ENCODE measurements at regions of chr3 and their contacts with region 1.

Region 1: GRCh38 chr3:66253790-66254620 is 33.2 kb downstream of the SLC25A26 start:
- DNase-seq: peak in 4 of 5 donors; percentile 30 to 50 (median 41)
- H3K4me3 ChIP-seq: no peak overlapping the region
- H3K4me3 Mint-ChIP-seq: no peak overlapping the region
- H3K27ac ChIP-seq: no peak overlapping the region
- H3K27ac Mint-ChIP-seq: peak overlapping the region in 2 of 7 donors; percentile 24 to 64
- H3K4me1 ChIP-seq: no peaks in the 10 kb centered on the region
- H3K4me1 Mint-ChIP-seq: peaks cover 4 to 11% (median 5%) of the 10 kb centered on the region in 4 donors
- H3K27me3 ChIP-seq: no peaks in the 10 kb centered on the region
- H3K27me3 Mint-ChIP-seq: no peaks in the 10 kb centered on the region

Region 2: DNA sequence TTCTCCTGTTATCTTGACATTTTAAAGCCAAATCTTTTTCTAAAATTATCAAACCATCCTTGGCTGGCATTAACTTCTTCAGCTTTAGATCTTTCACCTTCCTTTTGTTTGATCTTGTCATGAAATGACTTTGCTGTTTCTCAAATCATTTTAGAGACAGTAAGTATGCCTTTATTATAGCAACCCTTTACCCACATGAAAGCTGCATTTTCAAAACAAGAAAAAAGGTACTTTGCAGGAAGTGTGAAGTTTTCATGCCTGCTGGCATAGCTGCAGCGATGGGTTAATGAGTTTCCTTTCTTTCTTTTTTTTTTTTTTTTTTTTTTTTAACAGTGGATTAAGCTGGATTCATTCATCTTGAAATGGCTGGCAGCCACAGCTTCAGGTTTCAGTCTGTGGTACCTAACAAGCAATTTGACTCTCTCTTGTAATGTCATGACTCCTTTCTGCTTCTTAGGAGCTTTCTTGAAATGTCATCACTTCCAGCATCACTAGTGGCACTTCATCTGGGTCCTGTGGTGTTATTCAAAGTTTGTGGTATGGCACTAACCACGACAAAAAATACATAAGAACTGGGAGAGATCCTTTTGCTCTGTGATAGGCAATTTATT is 14.4 kb before region 1 on chr3:
- CTCF ChIA-PET with region 1: interaction called, 11 read pairs
- POLR2A ChIA-PET with region 1: no interaction called
- intact Hi-C with region 1: no loop called
- DNase-seq: peak in 1 of 5 donors; percentile 10
- H3K4me3 ChIP-seq: no peak overlapping the region
- H3K4me3 Mint-ChIP-seq: no peak overlapping the region
- H3K27ac ChIP-seq: no peak overlapping the region
- H3K27ac Mint-ChIP-seq: peak overlapping the region in 1 of 7 donors; percentile 2
- H3K4me1 ChIP-seq: no peaks in the 10 kb centered on the region
- H3K4me1 Mint-ChIP-seq: peaks cover 5 to 20% (median 13%) of the 10 kb centered on the region in 4 donors
- H3K27me3 ChIP-seq: no peaks in the 10 kb centered on the region
- H3K27me3 Mint-ChIP-seq: no peaks in the 10 kb centered on the region

Region 3: DNA sequence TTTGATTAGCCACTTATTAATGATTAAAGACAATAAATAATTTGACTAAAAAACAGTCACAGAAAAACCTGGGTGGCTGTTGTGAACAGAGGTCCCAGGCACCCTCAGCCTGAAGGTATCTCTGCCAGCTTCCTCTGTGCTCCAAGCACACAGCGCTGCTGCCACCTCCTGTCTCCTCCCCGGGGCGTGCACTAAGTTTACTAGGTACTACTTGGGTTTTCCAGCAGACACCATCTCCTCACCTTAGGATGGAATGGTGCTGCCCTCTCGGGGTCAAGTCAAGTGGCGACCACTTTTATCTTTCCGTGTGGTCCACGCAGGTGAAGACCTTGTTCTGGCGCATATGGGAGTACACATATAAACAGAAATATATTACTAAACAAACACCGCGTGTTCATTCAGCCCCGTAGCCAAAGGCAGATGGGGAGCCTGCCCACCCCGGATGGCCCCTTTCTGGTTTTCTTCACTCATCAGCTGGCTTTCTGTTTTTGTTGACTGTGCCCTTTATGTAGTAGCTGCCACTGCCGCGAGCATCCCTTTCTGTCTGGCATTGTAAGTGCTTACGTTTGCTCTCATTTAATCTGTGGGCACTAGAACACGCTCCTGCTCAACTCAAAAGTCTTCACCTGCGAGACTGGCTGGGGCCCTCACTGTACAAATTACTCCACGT is 118.8 kb after region 1 on chr3:
- CTCF ChIA-PET with region 1: interaction called, 46 read pairs
- POLR2A ChIA-PET with region 1: interaction called, 6 read pairs
- intact Hi-C with region 1: loop called (anchors 1 kb)
- DNase-seq: peak; percentile 35 to 56 (median 44)
- H3K4me3 ChIP-seq: no peak overlapping the region
- H3K4me3 Mint-ChIP-seq: no peak overlapping the region
- H3K27ac ChIP-seq: no peak overlapping the region
- H3K27ac Mint-ChIP-seq: peak overlapping the region in 6 of 7 donors; percentile 36 to 82 (median 74)
- H3K4me1 ChIP-seq: peaks cover 13% of the 10 kb centered on the region
- H3K4me1 Mint-ChIP-seq: peaks cover 18 to 45% (median 19%) of the 10 kb centered on the region in 4 donors
- H3K27me3 ChIP-seq: no peaks in the 10 kb centered on the region
- H3K27me3 Mint-ChIP-seq: no peaks in the 10 kb centered on the region

Region 4: GRCh38 chr3:66816090-66816761 is 562.2 kb after region 1 on chr3:
- CTCF ChIA-PET with region 1: interaction called, 183 read pairs
- POLR2A ChIA-PET with region 1: no interaction called
- intact Hi-C with region 1: loop called (anchors 1 kb)
- DNase-seq: peak in 4 of 5 donors; percentile 60 to 69 (median 64)
- H3K4me3 ChIP-seq: no peak overlapping the region
- H3K4me3 Mint-ChIP-seq: no peak overlapping the region
- H3K27ac ChIP-seq: no peak overlapping the region
- H3K27ac Mint-ChIP-seq: no peak overlapping the region
- H3K4me1 ChIP-seq: no peaks in the 10 kb centered on the region
- H3K4me1 Mint-ChIP-seq: peaks cover 0 to 2% (median under 1%) of the 10 kb centered on the region in 4 donors
- H3K27me3 ChIP-seq: no peaks in the 10 kb centered on the region
- H3K27me3 Mint-ChIP-seq: peaks cover 0 to 9% of the 10 kb centered on the region in 2 donors

Region 5: DNA sequence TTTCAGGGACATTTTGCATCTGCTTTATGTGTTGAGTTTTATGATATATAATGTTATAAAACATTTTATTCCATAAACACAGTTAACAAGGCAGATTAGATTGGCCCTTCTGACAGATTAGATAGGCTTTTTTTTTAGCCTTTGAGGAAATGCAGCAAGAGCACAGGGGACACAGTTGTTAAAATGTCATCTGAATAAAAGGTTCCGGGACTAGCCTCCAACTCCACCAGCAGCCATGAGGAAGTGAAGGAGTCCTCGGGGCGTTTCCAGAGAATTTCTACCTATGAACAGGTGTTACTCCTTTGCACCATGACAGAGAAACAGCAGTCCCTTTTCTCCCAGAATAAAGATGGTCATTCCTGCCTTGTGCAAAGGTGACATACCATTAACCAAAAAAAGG is 576.3 kb after region 1 on chr3:
- CTCF ChIA-PET with region 1: interaction called, 183 read pairs
- POLR2A ChIA-PET with region 1: no interaction called
- intact Hi-C with region 1: no loop called
- DNase-seq: no peak
- H3K4me3 ChIP-seq: no peak overlapping the region
- H3K4me3 Mint-ChIP-seq: no peak overlapping the region
- H3K27ac ChIP-seq: no peak overlapping the region
- H3K27ac Mint-ChIP-seq: no peak overlapping the region
- H3K4me1 ChIP-seq: no peaks in the 10 kb centered on the region
- H3K4me1 Mint-ChIP-seq: no peaks in the 10 kb centered on the region
- H3K27me3 ChIP-seq: no peaks in the 10 kb centered on the region
- H3K27me3 Mint-ChIP-seq: peaks cover 2 to 7% of the 10 kb centered on the region in 2 donors

Measured in CD4-positive, alpha-beta memory T cell (primary cell).